ENCODE measurements at regions of chr6 and their contacts with region 1.

Region 1: GRCh38 chr6:8102122-8102958 is at the start of gene EEF1E1:
- DNase-seq: peak; percentile 97
- ATAC-seq: peak; percentile 98
- H3K4me3 ChIP-seq: peak within 1 kb of the TSS; percentile 91 to 99 (median 93)
- H3K27ac ChIP-seq: peak within 1 kb of the TSS; percentile 79
- H3K4me1 ChIP-seq: peaks cover 41% of the 10 kb centered on the region
- H3K27me3 ChIP-seq: peaks cover 0 to 5% of the 10 kb centered on the region in 2 experiments; a peak in 1 of 5 replicates
- CTCF ChIP-seq: 0 out of 2 replicates have a peak, but pooled peaks have one; percentile 13
- EP300 ChIP-seq: peak; percentile 28 to 79; a peak in 3 of 4 replicates
- POLR2A ChIP-seq: peak; percentile 81 to 82
- RAD21 ChIP-seq: peak; percentile 61
- total RNA-seq, gene EEF1E1: 188 and 270 TPM in 2 replicates

Region 2: DNA sequence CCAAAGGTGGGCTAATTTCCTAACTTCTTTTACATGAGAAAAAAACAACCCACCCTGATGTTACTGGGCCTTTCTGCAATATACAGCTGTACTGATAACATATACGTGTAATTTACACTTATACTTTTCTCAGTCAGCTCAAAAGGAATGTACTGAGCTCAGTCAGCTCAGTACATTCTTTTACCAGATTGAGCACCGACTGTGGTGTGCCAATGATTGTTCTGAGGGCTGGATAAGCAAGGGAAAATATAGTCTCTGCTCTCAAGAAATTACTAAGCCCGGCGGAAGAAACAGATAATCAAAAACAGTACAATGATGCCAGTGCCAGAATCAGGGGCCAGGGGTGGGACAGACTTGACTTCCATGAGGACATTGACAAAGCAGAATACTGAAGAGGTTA is 28.1 kb before region 1 on chr6:
- CTCF ChIA-PET with region 1: no interaction called
- POLR2A ChIA-PET with region 1: interaction called, 21 read pairs
- in situ Hi-C with region 1: no loop called
- intact Hi-C with region 1: no loop called
- DNase-seq: no peak
- ATAC-seq: no peak
- H3K4me3 ChIP-seq: no peak overlapping the region
- H3K27ac ChIP-seq: no peak overlapping the region
- H3K4me1 ChIP-seq: peaks cover 14% of the 10 kb centered on the region
- H3K27me3 ChIP-seq: no peaks in the 10 kb centered on the region
- CTCF ChIP-seq: no peak
- EP300 ChIP-seq: no peak
- POLR2A ChIP-seq: no peak
- RAD21 ChIP-seq: no peak

Region 3: DNA sequence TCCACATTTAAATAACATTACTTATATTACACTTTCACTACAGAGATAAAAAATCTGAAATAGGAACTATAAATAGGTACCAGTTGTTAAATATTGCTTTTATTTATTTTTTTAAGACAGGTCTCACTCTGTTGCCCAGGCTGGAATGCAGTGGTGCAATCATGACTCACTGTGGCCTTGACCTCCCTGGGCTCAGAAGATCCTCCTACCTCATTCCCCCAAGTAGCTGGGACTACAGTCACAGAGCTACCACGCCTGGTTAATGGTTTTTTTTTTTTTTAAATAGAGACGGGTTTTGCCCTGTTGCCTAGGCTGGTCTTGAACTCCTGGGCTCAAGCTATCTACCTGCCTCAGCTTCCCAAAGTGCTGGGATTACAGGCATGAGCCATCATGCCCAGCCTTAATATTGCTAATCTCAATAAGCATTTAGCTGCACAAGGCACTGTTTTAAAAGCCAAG is 17.3 kb before region 1 on chr6:
- CTCF ChIA-PET with region 1: no interaction called
- POLR2A ChIA-PET with region 1: interaction called, 72 read pairs
- in situ Hi-C with region 1: no loop called
- intact Hi-C with region 1: loop called (anchors 2 kb)
- DNase-seq: peak; percentile 97
- ATAC-seq: peak; percentile 96
- H3K4me3 ChIP-seq: peak overlapping the region in 1 of 3 experiments; percentile 4; a peak in 1 of 6 replicates
- H3K27ac ChIP-seq: peak overlapping the region; percentile 85
- H3K4me1 ChIP-seq: peaks cover 64% of the 10 kb centered on the region
- H3K27me3 ChIP-seq: no peaks in the 10 kb centered on the region
- CTCF ChIP-seq: no peak
- EP300 ChIP-seq: peak; percentile 90 to 95
- POLR2A ChIP-seq: no peak
- RAD21 ChIP-seq: no peak; the same call in 1 of the 2 replicates

Region 4: DNA sequence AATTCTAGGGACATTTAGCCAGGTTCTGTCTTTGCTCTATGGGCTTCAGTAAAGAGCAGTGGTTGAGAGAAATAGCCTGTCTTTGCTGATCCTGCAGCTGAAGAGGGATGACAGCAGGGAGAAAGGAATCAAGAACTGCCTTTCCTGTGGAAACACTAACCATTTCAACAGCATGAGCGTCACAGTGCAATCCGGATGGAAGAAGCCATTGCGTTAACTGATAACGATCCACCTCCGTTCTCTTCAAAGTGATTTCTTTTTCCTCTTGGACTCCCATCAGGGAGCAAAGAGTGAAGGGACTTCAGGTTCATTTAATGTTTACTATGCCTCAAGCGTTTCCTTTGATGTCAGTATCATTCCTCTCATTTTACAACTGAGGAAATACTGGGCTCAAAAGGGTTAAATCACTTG is 35.2 kb after region 1 on chr6:
- CTCF ChIA-PET with region 1: no interaction called
- POLR2A ChIA-PET with region 1: no interaction called
- in situ Hi-C with region 1: no loop called
- intact Hi-C with region 1: no loop called
- DNase-seq: peak; percentile 89
- ATAC-seq: peak; percentile 95
- H3K4me3 ChIP-seq: peak overlapping the region in 1 of 3 experiments; percentile 23; a peak in 1 of 6 replicates
- H3K27ac ChIP-seq: peak overlapping the region; percentile 75
- H3K4me1 ChIP-seq: peaks cover 25% of the 10 kb centered on the region
- H3K27me3 ChIP-seq: no peaks in the 10 kb centered on the region
- CTCF ChIP-seq: no peak
- EP300 ChIP-seq: peak; percentile 76 to 92; a peak in 3 of 4 replicates
- POLR2A ChIP-seq: no peak
- RAD21 ChIP-seq: no peak

Region 5: DNA sequence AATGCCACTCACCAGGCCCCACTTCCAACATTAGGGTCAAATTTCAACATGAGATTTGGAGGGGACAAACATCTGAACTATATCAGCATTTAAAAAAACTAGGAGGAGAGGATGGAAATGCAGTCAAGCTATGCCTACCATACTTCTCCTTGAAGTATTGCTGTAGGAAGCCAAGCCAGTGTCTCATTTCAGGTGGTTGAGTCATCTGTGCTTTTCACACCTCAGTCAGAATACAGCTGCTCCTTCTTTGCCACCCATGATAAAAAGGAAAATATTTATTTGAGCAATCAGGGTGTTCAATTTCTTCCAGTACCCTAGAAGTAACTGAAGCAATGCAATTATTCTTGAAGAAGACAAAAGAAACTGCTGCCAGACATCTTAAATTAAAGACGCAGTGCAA is 47.0 kb after region 1 on chr6:
- CTCF ChIA-PET with region 1: no interaction called
- POLR2A ChIA-PET with region 1: no interaction called
- in situ Hi-C with region 1: no loop called
- intact Hi-C with region 1: no loop called
- DNase-seq: no peak
- ATAC-seq: no peak
- H3K4me3 ChIP-seq: no peak overlapping the region
- H3K27ac ChIP-seq: no peak overlapping the region
- H3K4me1 ChIP-seq: no peaks in the 10 kb centered on the region
- H3K27me3 ChIP-seq: no peaks in the 10 kb centered on the region
- CTCF ChIP-seq: no peak
- EP300 ChIP-seq: no peak
- POLR2A ChIP-seq: no peak
- RAD21 ChIP-seq: no peak

Region 6: DNA sequence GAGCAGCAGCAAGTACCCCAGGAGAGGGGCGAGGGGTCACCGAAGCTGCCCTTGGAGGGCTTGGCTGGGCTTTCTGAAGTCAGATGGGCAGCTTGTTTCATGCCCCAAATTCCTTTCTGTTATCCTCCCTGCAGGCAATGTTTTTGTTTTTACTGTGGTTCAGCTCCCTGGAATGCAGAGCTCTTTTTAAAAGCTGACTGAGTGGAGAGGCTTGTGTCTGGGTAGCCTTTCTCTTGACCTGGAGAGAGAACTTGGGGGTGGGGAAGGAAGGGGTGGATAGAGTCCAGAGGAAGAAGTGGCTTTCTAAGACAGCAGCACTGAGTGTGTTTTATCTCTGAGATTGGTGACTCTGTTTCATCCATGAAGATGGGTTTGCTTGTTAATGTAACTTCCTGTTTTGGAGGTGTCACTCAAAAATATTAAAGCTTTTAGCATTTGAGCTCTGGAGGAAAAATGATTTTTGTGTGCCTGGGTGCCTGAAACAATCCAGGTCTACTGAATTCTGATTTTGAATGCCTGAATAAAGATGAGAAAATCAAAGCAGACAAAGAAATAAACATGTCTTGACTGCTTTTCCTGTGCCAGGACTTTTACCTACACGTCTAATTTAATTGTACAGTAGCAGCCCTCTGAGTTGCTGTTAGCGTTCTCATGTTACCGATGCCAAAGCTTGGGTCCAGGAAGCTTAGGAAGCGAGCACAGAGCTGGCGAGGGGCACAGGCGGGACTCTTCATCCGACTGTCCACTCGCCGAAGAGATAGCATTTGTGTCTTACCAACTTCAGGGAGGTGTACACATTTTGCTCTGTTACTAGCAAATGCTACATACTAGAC is 78.2 kb after region 1 on chr6:
- CTCF ChIA-PET with region 1: no interaction called
- POLR2A ChIA-PET with region 1: no interaction called
- in situ Hi-C with region 1: no loop called
- intact Hi-C with region 1: no loop called
- DNase-seq: no peak
- ATAC-seq: no peak
- H3K4me3 ChIP-seq: no peak overlapping the region
- H3K27ac ChIP-seq: no peak overlapping the region
- H3K4me1 ChIP-seq: no peaks in the 10 kb centered on the region
- H3K27me3 ChIP-seq: 0 out of 5 replicates have a peak, but pooled peaks cover 0 to 6% of the 10 kb centered on the region in 2 experiments
- CTCF ChIP-seq: no peak
- EP300 ChIP-seq: no peak
- POLR2A ChIP-seq: no peak
- RAD21 ChIP-seq: no peak

Region 7: DNA sequence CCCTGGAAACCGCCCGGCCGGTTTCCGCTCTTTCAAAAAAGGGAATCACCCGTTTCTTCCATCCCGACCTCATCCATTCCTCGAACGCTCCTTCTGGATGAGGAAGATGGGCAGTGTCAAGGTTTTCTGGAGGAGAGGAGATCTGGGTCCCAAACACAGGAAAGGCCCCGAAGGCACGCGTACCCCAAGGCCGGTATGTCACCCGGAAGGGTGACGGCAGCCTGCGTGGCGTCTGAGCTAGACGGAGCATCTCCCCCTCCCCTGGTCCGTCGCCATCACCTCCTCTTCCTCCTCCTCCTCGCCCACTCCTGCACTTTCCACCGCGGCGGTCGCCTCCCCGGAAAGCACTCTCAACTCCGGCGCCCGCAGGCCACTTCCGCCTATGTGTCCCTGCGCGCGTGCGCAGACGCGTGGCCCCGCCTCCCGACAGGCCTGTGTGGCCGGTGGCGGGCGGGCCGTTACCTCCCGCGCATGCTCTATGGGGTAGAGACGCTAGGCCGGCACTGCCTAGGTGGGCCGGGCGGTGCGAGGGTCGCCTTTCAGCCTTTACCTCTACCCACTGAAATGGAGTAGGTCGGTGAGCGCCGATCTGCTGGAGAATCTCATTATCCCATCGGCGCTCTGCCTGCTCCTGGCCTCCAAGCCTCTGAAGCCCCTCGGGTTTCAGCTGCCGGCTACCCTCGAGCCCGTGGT is 333.0 kb after region 1 on chr6 and contains the start of gene SLC35B3:
- CTCF ChIA-PET with region 1: no interaction called
- POLR2A ChIA-PET with region 1: no interaction called
- in situ Hi-C with region 1: no loop called
- intact Hi-C with region 1: loop called (anchors 10 kb)
- DNase-seq: peak; percentile 92
- ATAC-seq: peak; percentile 98
- H3K4me3 ChIP-seq: peak within 1 kb of the TSS; percentile 67 to 96 (median 75)
- H3K27ac ChIP-seq: peak within 1 kb of the TSS; percentile 77
- H3K4me1 ChIP-seq: peaks cover 42% of the 10 kb centered on the region
- H3K27me3 ChIP-seq: no peaks in the 10 kb centered on the region; a peak in 1 of 5 replicates
- CTCF ChIP-seq: no peak
- EP300 ChIP-seq: no peak; a peak in 1 of 4 replicates
- POLR2A ChIP-seq: peak; percentile 94 to 96
- RAD21 ChIP-seq: peak; percentile 20; the same call in 1 of the 2 replicates
- total RNA-seq, gene SLC35B3: 13.5 and 14.0 TPM in 2 replicates

Region 8: GRCh38 chr6:8821981-8822381 is 719.6 kb after region 1 on chr6:
- CTCF ChIA-PET with region 1: no interaction called
- POLR2A ChIA-PET with region 1: no interaction called
- in situ Hi-C with region 1: no loop called
- intact Hi-C with region 1: no loop called
- DNase-seq: no peak
- ATAC-seq: no peak
- H3K4me3 ChIP-seq: no peak overlapping the region
- H3K27ac ChIP-seq: no peak overlapping the region
- H3K4me1 ChIP-seq: no peaks in the 10 kb centered on the region
- H3K27me3 ChIP-seq: no peaks in the 10 kb centered on the region
- CTCF ChIP-seq: no peak
- EP300 ChIP-seq: no peak
- POLR2A ChIP-seq: no peak
- RAD21 ChIP-seq: no peak